Naive thymus-derived CD4-positive, alpha-beta T cell (primary cell): ENCODE measurements at regions of chr11 and their contacts with region 1.

Region 1: DNA sequence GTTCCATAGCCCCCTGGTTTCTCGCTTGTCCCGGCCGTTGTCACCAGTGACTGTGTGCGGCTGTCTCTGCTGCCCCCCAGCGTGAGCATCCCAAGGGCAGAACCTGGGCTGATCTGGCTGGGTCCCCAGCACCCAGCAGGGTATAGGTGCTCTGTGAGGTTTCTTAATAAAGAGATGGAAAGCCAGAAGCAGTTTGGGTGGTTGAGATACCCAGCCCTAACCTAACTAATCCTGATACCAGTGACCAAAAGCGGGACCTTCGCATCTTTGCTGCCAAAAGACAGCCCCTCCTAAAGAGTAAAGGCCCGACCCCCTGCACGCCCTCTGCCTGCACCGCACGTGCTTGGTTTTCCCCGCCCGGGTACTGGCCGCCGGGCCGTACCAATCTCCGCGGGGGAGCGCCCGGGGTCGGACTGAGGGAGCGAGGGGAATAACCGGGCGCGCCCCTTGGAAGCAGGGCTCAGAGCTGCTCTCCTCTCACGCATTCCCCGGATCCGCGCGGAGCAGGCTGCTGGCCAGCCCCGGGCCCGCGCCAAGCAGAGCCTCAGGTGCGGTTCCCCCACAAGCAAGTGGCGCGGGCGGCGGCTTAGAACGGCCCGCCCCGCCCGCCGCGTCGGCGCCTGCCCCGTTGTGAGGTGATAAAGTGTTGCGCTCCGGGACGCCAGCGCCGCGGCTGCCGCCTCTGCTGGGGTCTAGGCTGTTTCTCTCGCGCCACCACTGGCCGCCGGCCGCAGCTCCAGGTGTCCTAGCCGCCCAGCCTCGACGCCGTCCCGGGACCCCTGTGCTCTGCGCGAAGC is at the start of gene DGAT2:
- DNase-seq: peak; percentile 23 to 72 (median 59)
- ATAC-seq: peak; percentile 83
- H3K4me3 ChIP-seq: peak within 1 kb of the TSS; percentile 55
- H3K4me3 Mint-ChIP-seq: peak within 1 kb of the TSS; percentile 74 to 84 (median 81)
- H3K27ac ChIP-seq: no peak within 1 kb of the TSS
- H3K27ac Mint-ChIP-seq: peak within 1 kb of the TSS in 5 of 9 donors; percentile 8 to 83 (median 58)
- H3K4me1 ChIP-seq: peaks cover 5 to 7% of the 10 kb centered on the region in 2 donors
- H3K4me1 Mint-ChIP-seq: peaks cover 13 to 22% (median 16%) of the 10 kb centered on the region in 7 donors
- H3K27me3 ChIP-seq: peaks cover 0 to 4% of the 10 kb centered on the region in 2 donors
- H3K27me3 Mint-ChIP-seq: peaks cover 7 to 24% (median 14%) of the 10 kb centered on the region in 5 donors
- total RNA-seq, gene DGAT2: 0.32 to 8.5 (median 1.4) TPM

Region 2: GRCh38 chr11:75706260-75706729 is 62.0 kb before region 1 on chr11:
- CTCF ChIA-PET with region 1: no interaction called
- POLR2A ChIA-PET with region 1: no interaction called
- intact Hi-C with region 1: loop called in 1 of 2 experiments (anchors 1 kb)
- DNase-seq: peak; percentile 19 to 65 (median 53)
- ATAC-seq: peak; percentile 92
- H3K4me3 ChIP-seq: no peak overlapping the region
- H3K4me3 Mint-ChIP-seq: peak overlapping the region in 3 of 10 donors; percentile 23 to 57 (median 53)
- H3K27ac ChIP-seq: no peak overlapping the region
- H3K27ac Mint-ChIP-seq: no peak overlapping the region
- H3K4me1 ChIP-seq: no peaks in the 10 kb centered on the region
- H3K4me1 Mint-ChIP-seq: peaks cover 7 to 17% (median 11%) of the 10 kb centered on the region in 7 donors
- H3K27me3 ChIP-seq: no peaks in the 10 kb centered on the region
- H3K27me3 Mint-ChIP-seq: peaks cover 0 to 20% (median 0%) of the 10 kb centered on the region in 5 donors

Region 3: DNA sequence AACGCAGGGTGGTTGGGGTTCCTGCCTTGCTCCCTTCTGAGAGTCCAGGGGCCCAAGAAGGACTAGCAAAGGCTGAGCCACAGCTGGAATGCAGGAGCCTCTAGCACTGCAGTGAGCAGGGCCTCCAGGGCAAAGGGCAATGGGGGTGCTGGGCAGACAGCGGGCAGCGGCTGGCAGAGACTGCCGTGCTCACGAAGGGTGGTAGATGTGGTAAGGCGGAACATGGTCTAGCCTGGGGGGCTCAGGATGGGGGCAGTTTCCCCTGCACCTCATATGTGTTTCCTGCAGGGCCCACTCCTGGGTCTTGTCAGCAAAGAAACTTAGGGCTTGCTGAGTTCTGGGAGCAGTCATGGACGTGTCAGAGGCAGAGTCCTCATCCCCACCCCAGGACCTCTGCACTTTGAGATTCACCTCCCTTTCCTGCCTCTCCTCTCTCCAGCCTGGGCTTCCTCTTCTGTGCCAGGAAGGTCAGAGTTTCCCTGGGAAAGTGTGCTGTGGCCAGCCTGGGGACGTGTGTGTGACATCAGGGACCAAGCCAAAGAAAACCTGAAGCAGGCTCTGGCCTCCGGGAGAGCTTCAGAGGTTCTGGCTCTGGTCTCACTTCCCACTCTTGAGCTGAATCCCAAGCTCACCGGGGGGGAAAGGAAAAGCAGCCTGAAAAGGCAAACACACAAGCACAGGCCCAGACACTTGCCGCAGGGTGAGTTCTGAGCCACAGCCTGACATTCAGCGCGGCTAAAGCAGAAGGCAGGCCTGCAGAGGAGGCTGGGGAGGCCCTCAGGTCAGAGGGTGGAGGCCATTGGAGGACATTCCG is 46.2 kb before region 1 on chr11:
- CTCF ChIA-PET with region 1: no interaction called
- POLR2A ChIA-PET with region 1: no interaction called
- intact Hi-C with region 1: loop called (anchors 1 kb)
- DNase-seq: no peak
- ATAC-seq: no peak
- H3K4me3 ChIP-seq: no peak overlapping the region
- H3K4me3 Mint-ChIP-seq: no peak overlapping the region
- H3K27ac ChIP-seq: no peak overlapping the region
- H3K27ac Mint-ChIP-seq: no peak overlapping the region
- H3K4me1 ChIP-seq: no peaks in the 10 kb centered on the region
- H3K4me1 Mint-ChIP-seq: peaks cover 0 to 5% (median 0%) of the 10 kb centered on the region in 7 donors
- H3K27me3 ChIP-seq: no peaks in the 10 kb centered on the region
- H3K27me3 Mint-ChIP-seq: peaks cover 0 to 1% (median 0%) of the 10 kb centered on the region in 5 donors

Region 4: GRCh38 chr11:75802913-75803820 is 34.9 kb after region 1 on chr11:
- CTCF ChIA-PET with region 1: no interaction called
- POLR2A ChIA-PET with region 1: no interaction called
- intact Hi-C with region 1: loop called in 1 of 2 experiments (anchors 5 kb)
- DNase-seq: peak; percentile 39 to 67 (median 54)
- ATAC-seq: peak; percentile 91
- H3K4me3 ChIP-seq: no peak overlapping the region
- H3K4me3 Mint-ChIP-seq: no peak overlapping the region
- H3K27ac ChIP-seq: no peak overlapping the region
- H3K27ac Mint-ChIP-seq: no peak overlapping the region
- H3K4me1 ChIP-seq: peaks cover 0 to 14% of the 10 kb centered on the region in 2 donors
- H3K4me1 Mint-ChIP-seq: peaks cover 0 to 22% (median 11%) of the 10 kb centered on the region in 7 donors
- H3K27me3 ChIP-seq: no peaks in the 10 kb centered on the region
- H3K27me3 Mint-ChIP-seq: no peaks in the 10 kb centered on the region

Region 5: DNA sequence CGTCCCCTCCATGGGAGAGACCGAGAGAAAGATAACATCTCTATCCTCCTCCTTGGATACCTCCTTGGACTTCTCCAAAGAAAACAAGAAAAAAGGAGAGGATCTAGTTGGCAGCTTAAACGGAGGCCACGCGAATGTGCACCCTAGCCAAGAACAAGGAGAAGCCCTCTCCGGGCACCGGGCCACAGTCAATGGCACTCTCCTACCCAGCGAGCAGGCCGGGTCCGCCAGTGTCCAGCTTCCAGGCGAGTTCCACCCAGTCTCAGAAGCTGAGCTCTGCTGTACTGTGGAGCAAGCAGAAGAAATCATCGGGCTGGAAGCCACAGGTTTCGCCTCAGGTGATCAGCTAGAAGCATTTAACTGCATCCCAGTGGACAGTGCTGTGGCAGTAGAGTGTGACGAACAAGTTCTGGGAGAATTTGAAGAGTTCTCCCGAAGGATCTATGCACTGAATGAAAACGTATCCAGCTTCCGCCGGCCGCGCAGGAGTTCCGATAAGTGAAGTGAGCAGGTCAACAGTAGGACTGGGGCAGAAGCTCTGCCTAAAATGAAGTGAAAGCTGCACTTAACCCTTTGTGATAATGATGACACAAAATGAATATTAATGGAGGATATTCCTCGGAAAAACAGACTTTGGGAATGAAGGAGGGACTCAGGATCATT is 372.7 kb after region 1 on chr11:
- CTCF ChIA-PET with region 1: no interaction called
- POLR2A ChIA-PET with region 1: no interaction called
- intact Hi-C with region 1: no loop called
- DNase-seq: no peak
- ATAC-seq: no peak
- H3K4me3 ChIP-seq: no peak overlapping the region
- H3K4me3 Mint-ChIP-seq: no peak overlapping the region
- H3K27ac ChIP-seq: no peak overlapping the region
- H3K27ac Mint-ChIP-seq: no peak overlapping the region
- H3K4me1 ChIP-seq: no peaks in the 10 kb centered on the region
- H3K4me1 Mint-ChIP-seq: peaks cover 0 to 2% (median 0%) of the 10 kb centered on the region in 7 donors
- H3K27me3 ChIP-seq: no peaks in the 10 kb centered on the region
- H3K27me3 Mint-ChIP-seq: no peaks in the 10 kb centered on the region

Region 6: DNA sequence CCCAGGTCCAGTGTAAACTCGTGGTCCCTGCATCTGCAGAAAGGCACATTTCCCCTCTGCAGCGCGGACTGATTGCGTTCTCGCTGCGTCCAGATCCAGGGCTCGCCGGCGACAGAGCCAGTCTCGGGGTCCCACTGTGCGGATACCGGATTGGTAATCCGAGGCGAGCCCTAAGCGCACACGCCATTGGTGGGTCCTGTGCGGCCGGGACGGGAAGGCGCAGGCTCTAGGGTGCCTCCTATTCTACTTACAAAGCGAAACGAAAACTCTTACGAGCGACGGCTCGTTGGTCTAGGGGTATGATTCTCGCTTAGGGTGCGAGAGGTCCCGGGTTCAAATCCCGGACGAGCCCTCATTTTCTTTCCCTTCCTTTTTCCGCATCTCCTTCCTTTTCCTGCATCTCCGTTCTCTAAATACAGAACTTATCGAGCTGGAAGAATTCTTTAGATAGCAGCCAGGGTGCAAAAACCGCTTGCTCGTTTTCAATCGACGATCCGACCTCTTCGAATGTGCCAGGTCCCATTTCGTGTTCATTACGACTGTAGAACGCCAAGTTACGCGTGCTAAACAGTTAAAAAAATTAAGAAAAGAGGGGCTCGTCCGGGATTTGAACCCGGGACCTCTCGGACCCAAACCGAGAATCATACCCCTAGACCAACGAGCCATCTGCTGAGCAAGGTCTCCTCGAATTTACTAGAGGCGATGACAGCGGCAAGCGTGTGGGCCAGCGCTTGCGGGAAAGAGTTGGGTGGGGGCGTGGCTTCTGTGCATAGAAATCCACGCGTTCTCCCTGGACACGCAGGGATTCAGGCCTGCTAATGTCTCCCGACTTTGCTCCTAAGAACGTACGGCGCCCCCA is 467.2 kb after region 1 on chr11:
- CTCF ChIA-PET with region 1: no interaction called
- POLR2A ChIA-PET with region 1: no interaction called
- intact Hi-C with region 1: loop called in 1 of 2 experiments (anchors 1 kb)
- DNase-seq: peak; percentile 79 to 95 (median 92)
- ATAC-seq: peak; percentile 87
- H3K4me3 ChIP-seq: peak overlapping the region; percentile 98
- H3K4me3 Mint-ChIP-seq: peak overlapping the region; percentile 82 to 94 (median 91)
- H3K27ac ChIP-seq: peak overlapping the region; percentile 57
- H3K27ac Mint-ChIP-seq: peak overlapping the region; percentile 89 to 99 (median 96)
- H3K4me1 ChIP-seq: peaks cover 26 to 40% of the 10 kb centered on the region in 2 donors
- H3K4me1 Mint-ChIP-seq: peaks cover 16 to 65% (median 55%) of the 10 kb centered on the region in 7 donors
- H3K27me3 ChIP-seq: no peaks in the 10 kb centered on the region
- H3K27me3 Mint-ChIP-seq: peaks cover 0 to 30% (median 0%) of the 10 kb centered on the region in 5 donors

Region 7: DNA sequence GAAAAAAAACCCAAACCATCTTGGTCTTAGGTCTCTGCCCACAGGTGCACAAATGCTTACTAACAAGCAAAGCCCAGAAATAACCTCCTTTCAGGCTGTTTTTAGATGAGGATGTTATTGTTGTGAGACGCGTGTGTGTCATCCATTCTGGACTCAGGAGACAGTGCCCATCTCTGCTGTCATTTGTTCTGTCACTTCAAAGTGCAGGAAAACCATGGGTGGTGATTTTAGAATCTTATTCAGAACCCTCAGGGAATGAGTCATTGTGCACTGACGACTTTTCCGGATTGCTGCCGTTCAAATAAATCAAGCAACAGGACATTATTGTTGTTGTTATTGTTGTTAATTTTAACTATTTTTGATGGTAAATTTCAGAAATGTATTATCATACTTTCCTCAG is 791.9 kb after region 1 on chr11:
- CTCF ChIA-PET with region 1: no interaction called
- POLR2A ChIA-PET with region 1: no interaction called
- intact Hi-C with region 1: loop called in 1 of 2 experiments (anchors 10 kb)
- DNase-seq: no peak
- ATAC-seq: peak; percentile 16
- H3K4me3 ChIP-seq: no peak overlapping the region
- H3K4me3 Mint-ChIP-seq: no peak overlapping the region
- H3K27ac ChIP-seq: no peak overlapping the region
- H3K27ac Mint-ChIP-seq: peak overlapping the region in 1 of 9 donors; percentile 40
- H3K4me1 ChIP-seq: no peaks in the 10 kb centered on the region
- H3K4me1 Mint-ChIP-seq: peaks cover 0 to 21% (median 0%) of the 10 kb centered on the region in 7 donors
- H3K27me3 ChIP-seq: no peaks in the 10 kb centered on the region
- H3K27me3 Mint-ChIP-seq: peaks cover 5 to 31% (median 24%) of the 10 kb centered on the region in 5 donors